Heart left ventricle (tissue), 16 donors: ENCODE measurements at regions of chr6 and their contacts with region 1.

Region 1: DNA sequence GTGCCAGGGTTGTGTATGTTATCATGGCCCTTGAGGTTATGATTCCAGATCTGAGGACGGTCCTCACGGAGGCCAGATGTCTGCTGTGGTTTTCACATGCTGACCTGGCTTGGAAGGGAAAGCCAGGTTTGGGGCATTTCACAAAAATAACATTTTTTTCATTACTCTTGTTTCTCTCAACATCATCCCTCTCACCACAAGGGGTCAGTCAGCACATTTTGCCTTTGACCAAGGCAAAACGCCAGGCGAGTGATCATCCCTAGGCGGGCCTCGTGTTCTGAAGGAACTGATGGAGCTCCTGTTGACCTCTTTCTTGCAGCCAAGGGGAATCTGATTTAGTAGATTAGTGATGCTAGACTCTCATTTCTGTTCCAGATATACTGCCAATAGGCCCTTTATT is 133.5 kb downstream of the TBC1D7 start:
- DNase-seq: peak in 3 of 5 donors; percentile 14 to 54 (median 40)
- ATAC-seq: peak in 1 of 4 donors; percentile 43
- H3K4me3 ChIP-seq: no peak overlapping the region
- H3K27ac ChIP-seq: no peak overlapping the region
- H3K4me1 ChIP-seq: peaks cover 0 to 8% (median 0%) of the 10 kb centered on the region in 12 donors
- H3K27me3 ChIP-seq: no peaks in the 10 kb centered on the region
- CTCF ChIP-seq: peak; percentile 21 to 60 (median 39)
- POLR2A ChIP-seq: no peak

Region 2: DNA sequence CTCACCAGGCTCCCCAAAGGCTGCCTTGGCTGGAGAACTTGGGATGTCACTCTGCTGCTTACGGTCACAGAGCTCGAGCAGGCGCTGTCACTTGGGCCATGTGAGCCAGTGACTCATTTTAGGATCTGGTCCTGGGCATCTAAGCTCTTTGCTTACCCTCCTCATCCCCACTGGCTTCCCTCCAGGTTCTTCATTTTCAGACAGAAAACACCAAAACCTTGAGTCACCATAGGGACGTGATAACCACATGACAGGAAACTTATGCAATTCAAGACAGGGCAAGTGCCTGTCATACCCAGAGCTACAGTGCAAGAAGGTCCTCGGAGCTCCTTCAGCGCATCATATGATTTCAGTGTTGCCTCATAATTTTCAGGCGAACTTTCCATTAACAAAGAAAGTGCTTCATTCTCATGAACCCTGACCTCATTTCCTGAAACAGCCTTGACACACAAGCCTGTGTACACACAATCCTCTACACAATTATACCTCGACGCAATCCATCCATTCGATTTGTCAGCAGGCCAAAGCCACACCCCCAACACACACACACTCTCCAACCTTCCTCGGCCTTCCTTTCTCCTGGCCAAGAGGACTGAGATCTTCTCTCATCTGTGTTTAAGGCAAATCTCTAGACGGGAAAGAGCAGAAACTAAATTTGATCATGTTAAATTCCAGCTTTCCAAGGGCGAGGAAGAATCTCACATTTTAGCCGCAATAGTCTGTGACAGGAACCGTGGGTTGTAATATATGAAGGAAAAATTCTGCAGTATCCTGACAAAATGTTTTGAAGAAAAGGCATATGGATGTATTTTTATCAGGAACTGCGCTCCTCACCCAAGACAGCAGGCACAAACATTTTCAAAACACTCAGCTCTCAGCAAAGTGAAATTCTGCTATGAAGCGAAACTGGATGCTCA is 108.2 kb after region 1 on chr6:
- intact Hi-C with region 1: loop called in 1 of 10 experiments (anchors 5 kb)
- DNase-seq: peak in 4 of 5 donors; percentile 48 to 73 (median 60)
- ATAC-seq: peak; percentile 35 to 85 (median 78)
- H3K4me3 ChIP-seq: peak overlapping the region in 7 of 12 donors; percentile 4 to 39 (median 15)
- H3K27ac ChIP-seq: peak overlapping the region; percentile 17 to 88 (median 70)
- H3K4me1 ChIP-seq: peaks cover 0 to 36% (median 28%) of the 10 kb centered on the region in 12 donors
- H3K27me3 ChIP-seq: no peaks in the 10 kb centered on the region
- CTCF ChIP-seq: no peak
- POLR2A ChIP-seq: no peak

Region 3: GRCh38 chr6:13319891-13320564 is 125.2 kb after region 1 on chr6:
- intact Hi-C with region 1: loop called in 3 of 10 experiments (anchors 5 to 10 kb)
- DNase-seq: no peak
- ATAC-seq: no peak
- H3K4me3 ChIP-seq: no peak overlapping the region
- H3K27ac ChIP-seq: no peak overlapping the region
- H3K4me1 ChIP-seq: peaks cover 0 to 6% (median 0%) of the 10 kb centered on the region in 12 donors
- H3K27me3 ChIP-seq: no peaks in the 10 kb centered on the region
- CTCF ChIP-seq: no peak
- POLR2A ChIP-seq: no peak